ENCODE measurements at regions of chr10 and their contacts with region 1.

Region 1: DNA sequence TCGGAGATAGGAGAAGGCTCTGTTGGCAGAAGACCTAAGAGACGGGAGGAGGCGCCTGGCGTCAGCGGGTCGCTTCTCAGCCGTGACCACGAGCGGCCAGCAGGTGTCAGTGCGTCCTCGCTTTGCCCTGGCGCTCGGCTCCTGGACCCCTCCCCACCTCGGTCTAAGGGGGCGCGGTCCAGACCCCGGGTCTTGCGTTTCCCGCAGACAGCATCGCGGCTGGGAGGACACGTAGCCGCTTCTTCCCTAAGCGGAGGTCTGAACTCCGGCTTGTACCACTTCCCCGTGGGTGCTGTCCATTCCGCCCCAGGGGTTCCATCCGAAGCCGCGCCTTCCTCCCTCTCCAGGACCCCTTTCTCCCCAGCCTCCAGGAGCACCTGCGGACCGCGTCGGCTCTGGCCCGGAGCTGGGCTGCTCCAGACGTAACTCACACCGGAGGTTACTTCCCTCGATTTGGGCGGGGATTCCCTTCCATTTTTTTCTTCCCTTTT is 593 bp upstream of the ADRA2A start:
- DNase-seq: no peak
- ATAC-seq: peak; percentile 62 to 72
- H3K4me3 ChIP-seq: peak overlapping the region; percentile 46 to 79 (median 57)
- H3K27ac ChIP-seq: no peak overlapping the region
- H3K4me1 ChIP-seq: peaks cover 0 to 21% of the 10 kb centered on the region in 2 donors
- H3K27me3 ChIP-seq: peaks cover 51 to 57% (median 54%) of the 10 kb centered on the region in 3 donors
- CTCF ChIP-seq: peak; percentile 41 to 79 (median 73)
- POLR2A ChIP-seq: no peak

Region 2: GRCh38 chr10:111109501-111110242 is 33.4 kb after region 1 on chr10:
- in situ Hi-C with region 1: no loop called
- intact Hi-C with region 1: no loop called
- DNase-seq: no peak
- ATAC-seq: no peak
- H3K4me3 ChIP-seq: no peak overlapping the region
- H3K27ac ChIP-seq: no peak overlapping the region
- H3K4me1 ChIP-seq: no peaks in the 10 kb centered on the region
- H3K27me3 ChIP-seq: no peaks in the 10 kb centered on the region
- CTCF ChIP-seq: no peak
- POLR2A ChIP-seq: no peak

Region 3: DNA sequence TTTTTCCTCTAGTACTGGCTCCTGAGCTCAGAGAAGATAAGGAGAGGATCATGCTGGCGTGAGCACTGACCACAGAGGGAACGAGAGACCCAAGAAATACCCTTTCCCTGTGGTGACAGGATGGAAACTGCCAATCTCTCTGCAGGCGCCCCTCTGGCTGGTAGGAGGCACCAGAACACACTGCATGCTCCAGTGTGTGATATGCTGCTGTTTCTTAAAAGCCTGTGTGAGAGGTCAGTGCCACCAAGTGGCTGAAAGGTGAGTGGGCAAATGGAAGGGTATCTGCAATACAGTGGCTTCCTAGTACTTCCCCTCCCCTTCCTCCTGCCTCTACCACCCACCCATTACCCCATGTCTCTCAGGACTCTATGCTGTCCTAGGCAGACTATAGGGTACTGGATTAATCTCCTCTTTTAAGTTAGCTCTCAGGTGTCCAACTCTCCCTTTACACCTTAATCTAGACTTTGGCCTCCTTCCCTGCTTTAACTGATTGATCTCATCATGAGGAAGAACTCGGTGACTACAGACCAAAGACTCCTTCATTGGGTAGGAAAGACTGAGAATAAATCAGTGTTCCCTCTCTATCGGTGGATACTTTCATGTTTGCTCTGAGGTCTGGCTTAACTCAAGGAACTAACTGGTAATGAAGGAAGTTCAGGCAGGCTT is 284.2 kb after region 1 on chr10:
- in situ Hi-C with region 1: loop called in 2 of 4 experiments (anchors 25 kb)
- intact Hi-C with region 1: loop called (anchors 2 kb)
- DNase-seq: peak; percentile 2 to 11
- ATAC-seq: no peak
- H3K4me3 ChIP-seq: no peak overlapping the region
- H3K27ac ChIP-seq: no peak overlapping the region
- H3K4me1 ChIP-seq: no peaks in the 10 kb centered on the region
- H3K27me3 ChIP-seq: peaks cover 0 to 7% (median 0%) of the 10 kb centered on the region in 3 donors
- CTCF ChIP-seq: peak in 3 of 5 experiments; percentile 17 to 40 (median 33)
- POLR2A ChIP-seq: no peak

Region 4: DNA sequence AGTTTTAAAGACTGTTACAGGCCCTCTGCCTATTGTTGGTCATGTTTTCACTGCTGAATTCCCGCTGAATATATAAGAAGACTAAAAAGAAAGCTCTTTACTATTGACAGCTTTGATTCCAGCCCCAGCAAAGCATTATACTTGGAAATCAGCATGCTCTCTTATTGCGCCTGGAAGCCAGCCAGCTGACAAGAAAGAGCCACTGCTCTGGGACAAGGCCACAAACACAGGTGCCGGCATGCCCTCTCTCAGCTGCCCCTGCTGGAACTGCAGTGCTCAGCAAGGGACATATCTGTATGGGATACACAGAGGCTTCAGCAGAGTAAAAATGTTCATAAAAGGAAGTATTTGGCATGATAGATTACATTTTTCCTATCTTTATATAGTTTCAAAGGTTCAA is 524.5 kb after region 1 on chr10:
- in situ Hi-C with region 1: loop called in 2 of 4 experiments (anchors 25 kb)
- intact Hi-C with region 1: no loop called
- DNase-seq: no peak
- ATAC-seq: no peak
- H3K4me3 ChIP-seq: no peak overlapping the region
- H3K27ac ChIP-seq: no peak overlapping the region
- H3K4me1 ChIP-seq: no peaks in the 10 kb centered on the region
- H3K27me3 ChIP-seq: no peaks in the 10 kb centered on the region
- CTCF ChIP-seq: no peak
- POLR2A ChIP-seq: no peak

Measured in gastrocnemius medialis (tissue), 4 donors.